ENCODE measurements at regions of chr9 and their contacts with region 1.

Region 1: DNA sequence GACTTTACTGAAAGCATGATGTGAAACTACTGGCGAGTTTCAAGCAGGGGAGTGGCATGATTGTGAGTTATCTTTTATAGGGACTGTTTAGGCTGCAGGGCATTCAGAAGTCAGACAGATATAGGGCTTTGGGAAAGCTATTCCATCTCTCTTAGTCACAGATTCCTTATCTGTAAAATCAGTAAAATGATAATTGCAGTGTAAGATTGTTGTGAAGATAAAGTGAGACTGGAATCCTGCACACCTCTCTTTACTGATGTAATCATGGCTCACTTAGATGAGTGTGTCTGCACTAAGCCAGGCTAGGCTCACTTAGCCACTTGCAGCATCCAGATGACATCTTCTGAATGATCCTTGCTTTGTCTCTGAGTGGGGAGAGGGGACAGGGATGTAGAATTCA is 81.8 kb upstream of the MAMDC2 start:
- DNase-seq: no peak
- H3K4me3 ChIP-seq: no peak overlapping the region
- CTCF ChIP-seq: no peak

Region 2: GRCh38 chr9:69951411-69951810 is 10.4 kb before region 1 on chr9:
- CTCF ChIA-PET with region 1: interaction called, 30 read pairs
- POLR2A ChIA-PET with region 1: no interaction called
- DNase-seq: no peak
- H3K4me3 ChIP-seq: no peak overlapping the region
- CTCF ChIP-seq: no peak

Region 3: GRCh38 chr9:69971643-69972449 is 10.0 kb after region 1 on chr9:
- CTCF ChIA-PET with region 1: interaction called, 33 read pairs
- POLR2A ChIA-PET with region 1: interaction called, 3 read pairs
- DNase-seq: no peak
- H3K4me3 ChIP-seq: no peak overlapping the region
- CTCF ChIP-seq: peak; percentile 84

Measured in AG04449 (cell line).